Heart right ventricle (tissue), 16 donors: ENCODE measurements at regions of chr1 and their contacts with region 1.

Region 1: GRCh38 chr1:151254217-151255213 is at the start of gene PSMD4:
- DNase-seq: peak; percentile 92 to 96
- ATAC-seq: peak; percentile 97 to 99 (median 99)
- H3K4me3 ChIP-seq: peak within 1 kb of the TSS; percentile 71 to 98 (median 92)
- H3K27ac ChIP-seq: peak within 1 kb of the TSS; percentile 37 to 98 (median 90)
- H3K4me1 ChIP-seq: peaks cover 4 to 31% (median 16%) of the 10 kb centered on the region in 9 donors
- H3K27me3 ChIP-seq: no peaks in the 10 kb centered on the region
- CTCF ChIP-seq: peak in 1 of 9 donors; percentile 17
- total RNA-seq, gene PSMD4: 119 to 157 (median 147) TPM

Region 2: GRCh38 chr1:151098126-151098525 is 156.4 kb before region 1 on chr1:
- intact Hi-C with region 1: loop called in 1 of 10 experiments (anchors 10 kb)
- DNase-seq: no peak
- ATAC-seq: no peak
- H3K4me3 ChIP-seq: no peak overlapping the region
- H3K27ac ChIP-seq: no peak overlapping the region
- H3K4me1 ChIP-seq: no peaks in the 10 kb centered on the region
- H3K27me3 ChIP-seq: no peaks in the 10 kb centered on the region
- CTCF ChIP-seq: no peak

Region 3: GRCh38 chr1:151108331-151108730 is 146.2 kb before region 1 on chr1:
- intact Hi-C with region 1: no loop called
- DNase-seq: no peak
- ATAC-seq: no peak
- H3K4me3 ChIP-seq: no peak overlapping the region
- H3K27ac ChIP-seq: no peak overlapping the region
- H3K4me1 ChIP-seq: no peaks in the 10 kb centered on the region
- H3K27me3 ChIP-seq: no peaks in the 10 kb centered on the region
- CTCF ChIP-seq: no peak

Region 4: GRCh38 chr1:151175910-151176309 is 78.6 kb before region 1 on chr1 and contains the start of gene TMOD4:
- intact Hi-C with region 1: no loop called
- DNase-seq: no peak
- ATAC-seq: peak in 7 of 8 donors; percentile 24 to 66 (median 45)
- H3K4me3 ChIP-seq: no peak within 1 kb of the TSS
- H3K27ac ChIP-seq: peak within 1 kb of the TSS in 1 of 10 donors; percentile 40
- H3K4me1 ChIP-seq: peaks cover 0 to 10% (median 0%) of the 10 kb centered on the region in 9 donors
- H3K27me3 ChIP-seq: no peaks in the 10 kb centered on the region
- CTCF ChIP-seq: peak in 8 of 9 donors; percentile 16 to 59 (median 42)
- total RNA-seq, gene TMOD4: 0.46 to 0.74 TPM in 2 of 10 donors, not detected in the others

Region 5: DNA sequence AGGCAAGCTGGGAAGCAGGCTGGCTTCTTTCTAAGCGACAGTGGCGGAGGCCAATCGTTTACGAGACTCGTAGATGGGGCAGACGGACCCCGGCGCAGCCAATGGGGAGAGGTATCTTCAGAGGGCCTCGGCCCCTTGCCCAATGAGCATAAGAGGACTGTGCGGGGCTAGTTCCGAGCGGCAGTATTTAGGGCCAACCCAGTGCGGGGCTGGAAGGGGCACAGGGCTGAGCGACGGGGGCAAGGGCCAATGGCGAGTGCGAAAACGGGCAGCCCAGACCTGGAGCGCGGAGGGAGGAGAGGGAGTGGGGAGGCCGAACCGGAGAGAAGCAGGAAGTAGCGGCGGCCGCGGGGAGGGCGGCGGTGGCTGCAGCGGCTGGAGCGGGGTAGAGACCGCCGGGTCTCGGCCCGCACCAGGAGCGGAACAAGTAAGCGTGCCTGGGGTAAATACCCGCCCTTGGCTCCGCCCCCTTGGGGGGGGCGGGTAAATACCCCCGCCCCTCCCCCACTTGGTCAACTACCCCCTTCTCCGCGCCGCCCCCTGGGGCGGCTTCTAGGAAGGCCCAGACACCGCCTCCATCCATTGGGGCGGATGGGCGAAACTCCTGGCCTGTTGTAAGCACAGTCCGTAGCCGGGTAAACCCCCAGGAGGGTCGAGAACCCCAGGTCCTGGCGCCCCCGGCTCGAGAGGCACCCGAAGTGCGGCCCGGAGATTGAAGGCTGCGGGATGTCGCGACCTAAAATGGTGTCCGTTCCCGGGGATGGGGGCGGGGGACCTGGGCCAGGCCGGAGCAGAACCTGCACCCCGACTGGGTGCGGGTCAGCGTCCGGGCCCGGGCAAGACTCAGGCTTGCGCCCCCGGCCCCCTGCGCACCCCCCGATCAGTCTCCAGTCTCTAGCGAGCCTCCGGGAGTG is 27.7 kb after region 1 on chr1 and contains the start of gene ZNF687:
- intact Hi-C with region 1: loop called in 1 of 10 experiments (anchors 1 kb)
- DNase-seq: peak; percentile 100
- ATAC-seq: peak; percentile 90 to 96 (median 94)
- H3K4me3 ChIP-seq: peak within 1 kb of the TSS; percentile 73 to 96 (median 86)
- H3K27ac ChIP-seq: peak within 1 kb of the TSS; percentile 94 to 99 (median 97)
- H3K4me1 ChIP-seq: peaks cover 0 to 36% (median 20%) of the 10 kb centered on the region in 9 donors
- H3K27me3 ChIP-seq: no peaks in the 10 kb centered on the region
- CTCF ChIP-seq: peak in 1 of 9 donors; percentile 13
- total RNA-seq, gene ZNF687: 10.4 to 15.1 (median 13.1) TPM